K562 (cell line): ENCODE measurements at regions of chr3 and their contacts with region 1.

Region 1: GRCh38 chr3:39398700-39399099 is 7.8 kb upstream of the RPSA start:
- DNase-seq: peak in 1 of 4 experiments; percentile 32
- ATAC-seq: peak; percentile 72
- H3K4me3 ChIP-seq: no peak overlapping the region
- H3K27ac ChIP-seq: no peak overlapping the region
- H3K4me1 ChIP-seq: no peaks in the 10 kb centered on the region
- H3K27me3 ChIP-seq: no peaks in the 10 kb centered on the region
- CTCF ChIP-seq: peak; percentile 19 to 40 (median 22); a peak in 2 of 6 replicates
- EP300 ChIP-seq: no peak
- POLR2A ChIP-seq: no peak
- RAD21 ChIP-seq: peak in 1 of 2 experiments; percentile 53; a peak in 2 of 4 replicates

Region 2: DNA sequence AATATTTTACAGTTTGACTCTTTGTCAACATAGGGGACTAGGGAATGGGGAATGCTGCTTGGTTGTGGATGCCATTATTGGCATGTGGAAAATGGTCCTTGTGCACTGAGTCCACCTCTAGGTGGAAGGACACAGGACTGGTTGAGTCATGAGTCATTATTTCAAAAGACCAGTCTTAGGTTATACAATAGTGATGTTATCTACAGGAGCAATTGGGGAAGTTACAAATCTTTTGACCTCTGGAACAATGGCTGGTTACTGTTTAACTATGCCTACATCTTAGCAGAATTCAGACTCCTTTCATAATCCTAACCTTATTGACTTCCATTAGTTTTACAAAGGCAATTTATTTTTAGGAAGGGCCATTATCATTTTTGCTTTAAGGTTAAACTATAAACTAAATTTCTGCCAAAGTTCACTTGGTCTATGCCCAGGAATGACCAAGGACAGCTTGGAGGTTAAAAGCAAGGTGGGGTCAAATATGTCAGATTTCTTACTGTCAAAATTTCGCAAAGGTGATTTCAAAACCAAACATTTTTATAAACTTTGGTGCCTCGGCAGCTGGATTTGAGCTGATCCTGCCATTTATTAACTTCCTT is 81.0 kb before region 1 on chr3:
- CTCF ChIA-PET with region 1: no interaction called
- POLR2A ChIA-PET with region 1: no interaction called
- in situ Hi-C with region 1: no loop called
- intact Hi-C with region 1: no loop called
- DNase-seq: no peak
- ATAC-seq: peak; percentile 47; the same call in 2 of the 3 replicates
- H3K4me3 ChIP-seq: no peak overlapping the region
- H3K27ac ChIP-seq: no peak overlapping the region
- H3K4me1 ChIP-seq: peaks cover 0 to 4% of the 10 kb centered on the region in 2 experiments; a peak in 1 of 5 replicates
- H3K27me3 ChIP-seq: no peaks in the 10 kb centered on the region
- CTCF ChIP-seq: no peak
- EP300 ChIP-seq: no peak
- POLR2A ChIP-seq: no peak
- RAD21 ChIP-seq: 0 out of 4 replicates have a peak, but pooled peaks of 1 of the 2 experiments have one; percentile 18

Region 3: DNA sequence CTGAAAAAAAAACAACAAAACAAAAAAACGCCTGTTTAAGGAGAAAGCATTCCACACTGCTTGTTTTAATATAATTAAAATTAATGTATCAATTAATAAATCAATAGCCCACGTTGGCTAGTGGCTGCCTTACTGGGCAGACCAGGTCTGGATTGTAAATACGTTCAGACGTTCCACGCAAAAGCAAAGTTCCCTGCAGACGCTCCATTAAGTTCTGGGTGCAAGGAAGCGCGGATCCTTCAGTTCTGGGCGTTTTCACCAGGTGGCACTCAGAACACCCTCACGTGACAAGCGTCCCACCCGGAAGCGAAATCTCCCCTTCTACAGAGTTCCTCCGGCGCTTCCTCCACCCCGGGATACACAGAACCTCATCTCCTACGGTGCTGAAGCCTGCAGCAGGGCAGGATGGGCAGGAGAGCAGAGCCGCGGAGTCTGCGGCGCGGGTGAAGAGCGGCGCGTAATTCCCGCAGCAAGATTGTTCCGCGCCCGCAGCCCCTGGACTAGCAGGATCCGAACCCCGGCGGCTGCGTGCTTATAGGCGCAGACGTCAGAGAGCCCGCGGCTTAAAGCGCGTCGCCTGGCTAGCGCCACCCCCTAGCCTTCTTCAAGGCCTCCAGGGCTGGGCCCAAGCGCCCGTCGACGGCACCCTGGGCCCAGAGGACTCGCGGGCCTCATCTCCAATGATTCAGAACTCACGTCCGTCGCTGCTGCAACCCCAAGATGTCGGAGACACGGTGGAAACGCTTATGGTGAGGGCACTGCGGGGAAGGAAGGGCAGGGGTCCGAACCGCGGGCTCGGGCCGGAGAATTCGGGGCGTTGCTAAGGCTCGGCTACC is 15.4 kb before region 1 on chr3 and contains the start of gene SLC25A38:
- CTCF ChIA-PET with region 1: no interaction called
- POLR2A ChIA-PET with region 1: interaction called, 29 read pairs
- in situ Hi-C with region 1: no loop called
- intact Hi-C with region 1: no loop called
- DNase-seq: peak; percentile 82 to 94 (median 88)
- ATAC-seq: peak; percentile 88
- H3K4me3 ChIP-seq: peak within 1 kb of the TSS; percentile 69
- H3K27ac ChIP-seq: peak within 1 kb of the TSS; percentile 85
- H3K4me1 ChIP-seq: peaks cover 39 to 50% of the 10 kb centered on the region in 2 experiments
- H3K27me3 ChIP-seq: peaks cover 3 to 4% of the 10 kb centered on the region in 2 experiments; a peak in 3 of 5 replicates
- CTCF ChIP-seq: peak; percentile 61 to 64 (median 61)
- EP300 ChIP-seq: peak; percentile 35; the same call in 1 of the 2 replicates
- POLR2A ChIP-seq: peak; percentile 78
- RAD21 ChIP-seq: peak; percentile 43 to 45; a peak in 2 of 4 replicates
- polyA plus RNA-seq, gene SLC25A38: 13.5 to 16.5 TPM